Colonic mucosa (tissue), 4 donors: ENCODE measurements at regions of chr19 and their contacts with region 1.

Region 1: DNA sequence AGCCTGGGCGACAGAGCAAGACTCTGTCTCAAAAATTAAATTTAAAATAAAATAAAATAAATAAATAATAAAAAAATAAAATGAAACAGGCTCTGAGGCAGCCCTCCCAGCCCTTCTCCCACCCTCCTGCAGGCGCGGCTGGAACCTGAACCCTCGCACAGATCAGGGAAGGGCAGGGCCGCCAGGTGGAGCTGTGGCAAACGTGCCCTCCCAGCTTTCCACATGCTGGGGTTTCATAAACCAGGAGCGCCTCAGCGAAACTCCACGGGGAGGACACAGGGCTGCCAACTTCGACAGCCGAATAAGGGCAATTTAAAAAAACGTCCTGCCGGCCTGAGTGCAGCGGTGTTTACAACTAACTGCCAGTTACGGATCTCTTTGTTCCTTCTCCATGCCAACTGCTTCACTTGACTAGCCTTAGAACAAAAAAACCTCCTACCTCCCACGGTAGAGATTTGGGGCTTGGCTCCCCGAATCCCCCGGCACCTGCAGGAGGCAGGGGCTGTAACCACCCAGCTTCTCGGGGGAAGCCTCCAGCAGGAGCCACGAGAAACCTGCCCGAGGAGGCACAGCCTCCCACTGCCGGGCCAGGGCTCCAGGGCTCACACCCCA is 15.9 kb downstream of the ZNF787 start:
- DNase-seq: peak; percentile 92
- H3K4me3 ChIP-seq: peak overlapping the region; percentile 20
- H3K27ac ChIP-seq: peak overlapping the region; percentile 75
- H3K4me1 ChIP-seq: peaks cover 25% of the 10 kb centered on the region
- H3K27me3 ChIP-seq: no peaks in the 10 kb centered on the region
- CTCF ChIP-seq: peak; percentile 69

Region 2: DNA sequence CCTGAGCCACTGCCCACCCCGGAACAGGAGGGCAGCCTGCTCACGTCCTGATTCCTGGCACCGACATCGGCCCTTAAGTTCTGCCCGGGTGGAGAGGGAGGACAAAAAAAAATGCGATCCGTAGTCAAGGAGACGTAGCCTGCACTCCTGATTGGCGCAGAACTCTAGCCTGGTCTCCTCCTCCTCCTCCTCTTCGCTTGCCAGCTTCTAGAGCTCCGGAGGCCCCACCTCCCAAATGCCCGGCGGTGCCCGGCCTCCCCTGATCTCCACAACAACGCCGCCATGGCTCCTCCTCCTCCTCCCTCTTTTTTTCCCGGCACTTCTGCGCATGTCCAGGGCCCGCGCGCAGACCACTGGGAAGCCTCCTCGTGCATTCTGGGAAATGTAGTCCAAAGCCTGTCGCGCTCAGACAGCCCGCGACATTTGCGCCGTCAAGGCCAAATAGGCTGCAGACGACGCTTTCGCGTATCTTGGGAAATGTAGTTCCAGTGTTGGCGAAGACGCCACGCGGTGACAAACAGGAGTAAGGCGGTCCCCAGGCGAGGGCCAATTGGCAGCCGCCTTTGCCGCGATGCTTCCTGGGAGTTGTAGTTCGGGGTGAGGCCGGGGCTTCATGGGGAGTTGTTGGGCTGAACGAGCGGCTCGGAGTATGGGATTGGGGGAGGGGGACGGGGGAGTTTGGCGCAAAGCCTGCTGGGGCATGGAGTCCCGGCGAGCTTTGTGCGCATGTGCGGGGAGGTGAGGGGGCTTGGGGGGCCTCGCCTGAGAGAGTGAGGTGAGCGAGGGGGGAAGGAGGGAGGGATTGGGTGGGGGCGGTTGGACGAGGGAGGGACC is 35.6 kb after region 1 on chr19 and contains the start of gene ZNF444:
- intact Hi-C with region 1: loop called (anchors 5 kb)
- DNase-seq: peak; percentile 99
- H3K4me3 ChIP-seq: peak within 1 kb of the TSS; percentile 44
- H3K27ac ChIP-seq: peak within 1 kb of the TSS; percentile 89
- H3K4me1 ChIP-seq: peaks cover 10% of the 10 kb centered on the region
- H3K27me3 ChIP-seq: no peaks in the 10 kb centered on the region
- CTCF ChIP-seq: no peak
- total RNA-seq, gene ZNF444: 20.5 to 50.9 TPM